Activated naive CD4-positive, alpha-beta T cell treated with anti-CD3 and anti-CD28 coated beads for 36 hours (primary cell): ENCODE measurements at regions of chr11 and their contacts with region 1.

Region 1: DNA sequence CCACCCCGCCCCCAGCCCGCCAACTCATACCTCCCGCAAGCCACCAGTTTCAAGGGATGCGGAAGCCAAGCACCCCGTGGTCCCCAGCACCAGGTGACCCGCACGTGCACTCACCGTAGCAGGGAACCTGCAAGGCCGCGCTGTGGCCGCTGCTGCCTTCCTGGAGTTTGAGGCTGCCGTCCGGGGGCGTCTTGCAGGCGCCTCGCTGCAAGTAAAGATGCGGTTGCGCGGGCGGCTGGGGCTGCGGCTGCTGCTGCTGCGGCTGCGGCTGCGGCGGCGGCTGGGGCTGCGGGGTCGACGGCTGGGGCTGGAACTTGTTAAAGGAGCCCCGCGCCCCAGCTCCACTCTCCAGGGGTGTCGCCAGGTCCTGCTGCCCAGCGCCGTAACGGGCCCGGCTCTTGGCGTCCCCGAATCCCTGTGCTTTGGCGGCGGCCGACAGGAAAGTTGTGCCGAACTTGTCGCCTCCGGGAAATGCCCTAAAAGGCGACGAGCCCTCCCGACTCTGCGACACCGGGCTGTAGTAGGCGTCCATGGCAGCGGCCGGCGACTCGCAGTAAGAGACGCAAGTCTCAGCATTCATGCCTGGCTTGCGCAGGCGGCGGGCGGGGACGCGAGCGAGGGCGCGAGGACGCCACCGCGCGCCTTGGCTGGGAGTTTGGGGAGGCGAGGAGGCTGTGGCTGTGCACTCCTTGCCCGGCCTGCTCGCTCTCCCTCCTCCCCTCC is at the start of gene ALX4:
- DNase-seq: peak; percentile 77
- H3K4me3 Mint-ChIP-seq: peak within 1 kb of the TSS; percentile 49
- H3K27ac Mint-ChIP-seq: no peak within 1 kb of the TSS
- H3K4me1 Mint-ChIP-seq: peaks cover 19% of the 10 kb centered on the region
- H3K27me3 Mint-ChIP-seq: peaks cover 89% of the 10 kb centered on the region
- total RNA-seq, gene ALX4: not detected

Region 2: DNA sequence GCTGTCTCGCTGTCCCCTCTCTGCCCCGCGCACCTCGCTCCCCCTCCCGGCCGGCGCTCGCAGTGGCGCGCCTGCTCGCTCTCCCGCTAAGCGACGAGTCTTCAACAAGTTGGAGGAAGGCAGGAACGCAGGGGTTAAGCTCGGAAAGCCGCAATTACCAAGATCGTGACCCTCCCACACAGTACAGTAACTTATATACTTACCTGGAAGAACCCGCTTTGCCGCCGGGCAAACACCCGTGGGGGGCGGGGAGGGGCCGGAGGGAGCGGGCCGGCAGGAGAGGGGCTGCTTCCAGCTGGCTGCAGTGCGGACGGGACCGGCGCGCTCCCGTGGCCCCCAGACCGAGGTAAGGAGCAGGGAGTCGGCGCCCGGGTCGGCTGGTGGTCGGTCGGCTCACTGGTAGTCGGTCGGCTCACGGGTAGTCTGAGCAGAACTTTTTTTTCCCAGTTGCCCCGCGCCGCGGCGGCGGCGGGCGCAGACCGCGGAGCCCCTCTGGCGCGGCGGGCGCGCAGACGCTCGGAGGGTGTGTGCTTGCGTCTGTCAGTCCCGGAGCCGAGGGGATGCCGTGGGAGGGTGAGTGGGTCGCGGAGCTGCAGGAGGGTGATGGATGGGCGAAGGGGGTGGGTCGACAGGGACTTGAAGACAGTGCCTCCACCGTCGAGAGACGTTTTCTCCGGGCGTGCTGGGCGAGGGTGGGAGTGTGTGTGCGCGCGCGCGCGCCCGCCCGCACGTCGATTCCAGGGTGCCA is 730.3 kb before region 1 on chr11:
- CTCF ChIA-PET with region 1: no interaction called
- intact Hi-C with region 1: loop called (anchors 10 kb)
- DNase-seq: peak; percentile 58
- H3K4me3 Mint-ChIP-seq: peak overlapping the region; percentile 72
- H3K27ac Mint-ChIP-seq: no peak overlapping the region
- H3K4me1 Mint-ChIP-seq: peaks cover 54% of the 10 kb centered on the region
- H3K27me3 Mint-ChIP-seq: peaks cover 93% of the 10 kb centered on the region

Region 3: GRCh38 chr11:44143943-44144909 is 165.4 kb before region 1 on chr11:
- CTCF ChIA-PET with region 1: no interaction called
- intact Hi-C with region 1: no loop called
- DNase-seq: no peak
- H3K4me3 Mint-ChIP-seq: no peak overlapping the region
- H3K27ac Mint-ChIP-seq: no peak overlapping the region
- H3K4me1 Mint-ChIP-seq: no peaks in the 10 kb centered on the region
- H3K27me3 Mint-ChIP-seq: no peaks in the 10 kb centered on the region

Region 4: DNA sequence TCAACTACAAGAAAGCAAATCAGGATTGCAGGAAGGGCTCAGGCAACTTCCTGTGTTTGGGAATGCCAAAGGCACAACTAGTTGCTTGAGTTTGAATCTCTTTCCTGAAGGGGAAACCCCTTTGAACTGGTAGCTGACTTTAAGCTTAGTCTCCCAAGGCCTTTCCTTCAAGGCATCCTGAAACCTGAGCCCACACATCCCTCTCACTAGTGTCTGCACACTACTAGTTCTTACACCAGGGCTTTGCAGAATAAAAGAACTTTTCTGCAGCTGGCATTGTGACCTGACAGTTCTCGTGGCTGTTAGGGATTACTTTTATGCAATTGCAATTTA is 118.8 kb before region 1 on chr11:
- CTCF ChIA-PET with region 1: no interaction called
- intact Hi-C with region 1: loop called (anchors 5 kb)
- DNase-seq: no peak
- H3K4me3 Mint-ChIP-seq: no peak overlapping the region
- H3K27ac Mint-ChIP-seq: no peak overlapping the region
- H3K4me1 Mint-ChIP-seq: peaks cover 32% of the 10 kb centered on the region
- H3K27me3 Mint-ChIP-seq: no peaks in the 10 kb centered on the region

Region 5: GRCh38 chr11:44319552-44320288 is 10.1 kb after region 1 on chr11:
- CTCF ChIA-PET with region 1: no interaction called
- intact Hi-C with region 1: loop called (anchors 1 kb)
- DNase-seq: no peak
- H3K4me3 Mint-ChIP-seq: no peak overlapping the region
- H3K27ac Mint-ChIP-seq: no peak overlapping the region
- H3K4me1 Mint-ChIP-seq: peaks cover 15% of the 10 kb centered on the region
- H3K27me3 Mint-ChIP-seq: peaks cover 83% of the 10 kb centered on the region

Region 6: DNA sequence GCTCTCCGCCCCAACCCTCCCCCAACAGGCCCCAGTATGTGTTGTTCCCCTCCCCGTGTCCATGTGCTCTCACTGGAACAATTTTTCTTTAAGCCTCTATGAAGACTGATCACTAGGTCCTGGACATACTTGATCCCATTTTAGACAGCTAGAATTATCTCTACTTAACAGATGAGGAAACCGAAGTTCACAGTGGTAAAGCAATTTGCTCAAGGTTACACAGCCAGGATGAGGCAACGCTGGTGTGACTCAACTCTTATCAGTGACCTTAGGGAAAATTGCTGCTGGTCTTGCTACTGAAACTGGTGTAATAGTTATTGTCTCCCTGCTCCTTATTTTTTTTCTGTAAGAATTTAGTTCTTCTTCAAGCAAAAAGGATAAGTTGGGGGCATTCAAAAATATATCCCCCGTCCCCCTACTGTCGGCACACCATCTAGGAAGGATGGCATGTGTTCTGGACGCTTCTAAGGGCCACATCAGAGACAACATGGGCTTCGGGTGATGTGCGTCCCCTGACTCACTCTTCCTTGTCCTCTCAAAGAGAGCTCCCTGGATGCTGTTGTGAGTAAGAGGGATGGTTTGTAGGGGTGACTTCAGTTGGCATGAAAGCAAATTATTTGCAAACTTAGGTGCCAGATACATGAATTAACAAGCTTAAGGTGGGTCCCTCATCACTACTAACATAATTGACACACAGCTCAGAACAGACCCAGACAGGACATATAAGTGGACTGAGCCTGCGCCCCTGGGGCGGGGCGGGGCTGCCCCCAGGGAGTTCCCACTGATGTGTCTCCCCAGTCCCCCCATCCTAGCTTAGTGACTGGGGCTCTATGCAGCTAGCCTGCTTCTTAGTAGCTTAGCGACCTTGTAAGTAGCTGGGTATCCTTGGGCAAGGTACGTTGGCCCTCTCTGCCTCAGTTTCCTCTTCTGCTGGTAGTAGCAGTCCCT is 23.9 kb after region 1 on chr11:
- CTCF ChIA-PET with region 1: no interaction called
- intact Hi-C with region 1: no loop called
- DNase-seq: no peak
- H3K4me3 Mint-ChIP-seq: no peak overlapping the region
- H3K27ac Mint-ChIP-seq: no peak overlapping the region
- H3K4me1 Mint-ChIP-seq: peaks cover 2% of the 10 kb centered on the region
- H3K27me3 Mint-ChIP-seq: peaks cover 54% of the 10 kb centered on the region

Region 7: DNA sequence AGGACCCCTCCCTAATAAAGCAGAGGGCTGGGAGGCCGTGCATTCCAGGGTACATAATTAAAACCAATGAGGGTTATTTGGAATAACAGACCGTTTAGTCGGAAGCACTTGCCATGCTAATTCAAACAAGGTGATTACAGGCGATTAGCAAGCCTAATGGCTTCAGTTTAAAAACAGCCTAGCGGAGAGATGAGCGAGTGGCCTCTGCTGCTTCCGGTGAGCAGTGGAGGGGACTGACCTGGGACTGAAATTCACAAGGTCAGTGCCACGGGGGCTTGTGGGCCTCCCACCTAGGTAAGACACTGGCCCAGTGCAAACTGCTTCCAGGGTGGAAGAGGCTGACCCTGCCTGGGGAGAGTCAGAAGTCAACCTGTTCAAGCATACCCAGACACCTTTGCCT is 57.1 kb after region 1 on chr11:
- CTCF ChIA-PET with region 1: no interaction called
- intact Hi-C with region 1: no loop called
- DNase-seq: no peak
- H3K4me3 Mint-ChIP-seq: no peak overlapping the region
- H3K27ac Mint-ChIP-seq: no peak overlapping the region
- H3K4me1 Mint-ChIP-seq: no peaks in the 10 kb centered on the region
- H3K27me3 Mint-ChIP-seq: peaks cover 3% of the 10 kb centered on the region